ENCODE measurements at regions of chr11 and their contacts with region 1.

Region 1: DNA sequence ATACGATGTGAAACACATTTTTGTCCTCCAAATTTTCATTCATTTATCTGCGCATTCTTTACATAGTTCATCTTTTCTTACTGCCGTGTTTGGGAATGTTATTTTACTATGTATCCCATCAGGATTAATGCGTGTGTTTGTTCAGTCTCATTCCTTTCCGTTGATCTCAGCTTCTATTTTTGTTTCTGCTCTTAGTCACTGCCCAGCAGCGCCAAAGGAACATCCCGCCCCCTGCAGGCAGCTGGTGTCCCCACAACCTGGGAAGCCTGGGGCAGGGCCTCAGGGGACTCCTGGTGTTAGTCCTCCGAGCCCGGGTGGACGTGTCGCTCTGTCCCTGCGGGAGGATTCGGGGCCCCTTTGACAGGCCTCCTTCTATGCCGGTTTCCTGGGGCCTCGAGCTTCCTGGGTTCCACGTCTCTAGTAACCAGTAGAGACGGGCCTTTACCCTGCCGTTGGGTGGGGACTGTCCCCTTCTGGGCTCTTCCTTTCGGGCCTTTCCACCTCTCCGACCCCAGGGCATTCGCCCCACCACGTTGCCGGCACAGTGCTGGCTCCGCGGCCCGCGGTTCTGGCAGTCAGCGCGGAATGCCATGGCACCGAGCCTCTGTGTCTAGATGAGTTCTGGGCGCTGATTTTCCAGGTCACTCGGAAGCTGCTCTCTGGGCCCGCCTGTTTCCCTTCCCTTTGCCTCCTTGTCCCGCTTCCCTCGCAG is 39.8 kb downstream of the WEE1 start:
- DNase-seq: peak; percentile 93
- H3K4me3 Mint-ChIP-seq: peak overlapping the region; percentile 81
- H3K27ac Mint-ChIP-seq: peak overlapping the region; percentile 97
- H3K4me1 Mint-ChIP-seq: peaks cover 34% of the 10 kb centered on the region
- H3K27me3 Mint-ChIP-seq: no peaks in the 10 kb centered on the region

Region 2: GRCh38 chr11:9534791-9535781 is 78.2 kb before region 1 on chr11:
- CTCF ChIA-PET with region 1: interaction called, 129 read pairs
- POLR2A ChIA-PET with region 1: interaction called, 17 read pairs
- intact Hi-C with region 1: loop called (anchors 1 kb)
- DNase-seq: peak; percentile 87
- H3K4me3 Mint-ChIP-seq: no peak overlapping the region
- H3K27ac Mint-ChIP-seq: no peak overlapping the region
- H3K4me1 Mint-ChIP-seq: no peaks in the 10 kb centered on the region
- H3K27me3 Mint-ChIP-seq: no peaks in the 10 kb centered on the region

Region 3: GRCh38 chr11:9573052-9573774 is 40.1 kb before region 1 on chr11 and contains the start of gene WEE1:
- CTCF ChIA-PET with region 1: interaction called, 75 read pairs
- POLR2A ChIA-PET with region 1: interaction called, 21 read pairs
- intact Hi-C with region 1: loop called (anchors 1 kb)
- DNase-seq: peak; percentile 99
- H3K4me3 Mint-ChIP-seq: peak within 1 kb of the TSS; percentile 97
- H3K27ac Mint-ChIP-seq: peak within 1 kb of the TSS; percentile 82
- H3K4me1 Mint-ChIP-seq: peaks cover 36% of the 10 kb centered on the region
- H3K27me3 Mint-ChIP-seq: no peaks in the 10 kb centered on the region
- total RNA-seq, gene WEE1: 47.8 to 52.4 TPM

Region 4: GRCh38 chr11:9601037-9601875 is 12.0 kb before region 1 on chr11:
- CTCF ChIA-PET with region 1: interaction called, 63 read pairs
- POLR2A ChIA-PET with region 1: interaction called, 27 read pairs
- intact Hi-C with region 1: loop called (anchors 1 kb)
- DNase-seq: peak; percentile 87
- H3K4me3 Mint-ChIP-seq: peak overlapping the region; percentile 68
- H3K27ac Mint-ChIP-seq: peak overlapping the region; percentile 84
- H3K4me1 Mint-ChIP-seq: peaks cover 24% of the 10 kb centered on the region
- H3K27me3 Mint-ChIP-seq: no peaks in the 10 kb centered on the region

Region 5: GRCh38 chr11:9748361-9748970 is 135.2 kb after region 1 on chr11:
- CTCF ChIA-PET with region 1: interaction called, 88 read pairs
- POLR2A ChIA-PET with region 1: interaction called, 7 read pairs
- intact Hi-C with region 1: loop called (anchors 1 kb)
- DNase-seq: peak; percentile 79
- H3K4me3 Mint-ChIP-seq: no peak overlapping the region
- H3K27ac Mint-ChIP-seq: no peak overlapping the region
- H3K4me1 Mint-ChIP-seq: peaks cover 11% of the 10 kb centered on the region
- H3K27me3 Mint-ChIP-seq: no peaks in the 10 kb centered on the region

Region 6: DNA sequence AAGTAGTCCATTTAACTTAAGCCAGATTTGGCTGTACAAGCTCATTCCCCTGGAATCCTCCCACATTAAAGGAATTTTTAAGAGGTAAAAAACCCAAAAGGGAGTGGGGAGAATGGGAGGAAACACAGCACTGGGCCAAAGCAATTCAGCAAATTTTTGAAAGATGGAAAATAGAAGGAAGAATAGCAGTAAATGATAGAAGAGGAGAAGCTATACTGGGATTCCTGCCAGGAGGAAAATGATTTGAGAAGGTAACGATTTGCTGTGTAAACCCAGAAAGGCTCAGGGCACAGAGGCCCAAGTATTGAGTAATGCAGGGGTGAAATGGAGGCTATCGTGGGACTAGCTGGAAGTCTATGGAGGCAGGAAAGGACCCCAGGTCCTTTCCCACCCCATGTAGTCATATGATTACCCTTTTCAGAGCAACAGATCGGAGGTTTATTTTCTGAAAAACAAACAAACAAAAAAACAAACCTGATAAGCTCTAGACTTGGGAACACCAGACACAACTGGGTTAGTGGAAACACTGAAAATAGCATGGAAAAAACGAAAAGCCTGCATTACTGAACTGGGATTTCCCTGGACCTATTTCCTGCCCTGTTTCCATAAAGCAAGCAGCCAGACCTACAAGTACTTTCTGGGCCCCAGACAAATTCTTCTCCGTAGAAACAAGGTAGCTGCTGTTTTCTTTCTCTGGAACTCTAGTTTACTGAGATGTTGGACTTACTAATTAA is 190.6 kb after region 1 on chr11:
- CTCF ChIA-PET with region 1: no interaction called
- POLR2A ChIA-PET with region 1: no interaction called
- intact Hi-C with region 1: no loop called
- DNase-seq: no peak
- H3K4me3 Mint-ChIP-seq: no peak overlapping the region
- H3K27ac Mint-ChIP-seq: no peak overlapping the region
- H3K4me1 Mint-ChIP-seq: peaks cover 4% of the 10 kb centered on the region
- H3K27me3 Mint-ChIP-seq: no peaks in the 10 kb centered on the region

Region 7: GRCh38 chr11:10322830-10323792 is 709.8 kb after region 1 on chr11:
- CTCF ChIA-PET with region 1: no interaction called
- POLR2A ChIA-PET with region 1: no interaction called
- intact Hi-C with region 1: loop called (anchors 5 kb)
- DNase-seq: peak; percentile 67
- H3K4me3 Mint-ChIP-seq: peak overlapping the region; percentile 48
- H3K27ac Mint-ChIP-seq: peak overlapping the region; percentile 77
- H3K4me1 Mint-ChIP-seq: peaks cover 13% of the 10 kb centered on the region
- H3K27me3 Mint-ChIP-seq: peaks cover 7% of the 10 kb centered on the region

Measured in activated CD4-positive, alpha-beta memory T cell treated with anti-CD3 and anti-CD28 coated beads for 36 hours (primary cell).